AG04449 (cell line): ENCODE measurements at regions of chr1 and their contacts with region 1.

Region 1: GRCh38 chr1:151098126-151098525 is 27.6 kb downstream of the GABPB2 start:
- DNase-seq: no peak
- H3K4me3 ChIP-seq: no peak overlapping the region
- CTCF ChIP-seq: no peak

Region 2: DNA sequence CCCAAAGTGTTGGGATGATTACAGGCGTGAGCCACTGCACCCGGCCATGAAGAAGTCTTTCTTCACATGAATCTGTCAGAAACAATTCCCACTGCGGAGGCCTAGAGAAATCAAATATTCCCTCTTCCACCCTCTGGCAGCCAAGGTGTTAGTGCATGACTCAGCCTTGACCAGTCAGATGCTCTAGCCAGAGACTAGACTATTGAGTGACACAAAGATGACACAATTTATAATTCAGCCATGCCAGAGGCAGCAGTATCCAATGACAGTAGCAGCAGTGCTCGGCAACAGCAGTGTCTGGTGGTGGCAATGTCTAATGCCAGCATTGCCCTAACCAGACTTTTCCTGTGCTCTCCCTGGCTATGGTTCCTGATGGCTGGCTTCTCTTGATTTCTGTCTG is 202.5 kb before region 1 on chr1:
- CTCF ChIA-PET with region 1: no interaction called
- POLR2A ChIA-PET with region 1: no interaction called
- DNase-seq: no peak
- H3K4me3 ChIP-seq: no peak overlapping the region
- CTCF ChIP-seq: no peak

Region 3: GRCh38 chr1:151085953-151086559 is 12.1 kb before region 1 on chr1:
- CTCF ChIA-PET with region 1: interaction called, 115 read pairs
- POLR2A ChIA-PET with region 1: no interaction called
- DNase-seq: no peak
- H3K4me3 ChIP-seq: no peak overlapping the region
- CTCF ChIP-seq: no peak

Region 4: GRCh38 chr1:151124763-151125403 is 26.8 kb after region 1 on chr1:
- CTCF ChIA-PET with region 1: interaction called, 16 read pairs
- POLR2A ChIA-PET with region 1: no interaction called
- DNase-seq: no peak
- H3K4me3 ChIP-seq: no peak overlapping the region
- CTCF ChIP-seq: no peak

Region 5: GRCh38 chr1:151145304-151146071 is 47.4 kb after region 1 on chr1:
- CTCF ChIA-PET with region 1: interaction called, 412 read pairs
- POLR2A ChIA-PET with region 1: no interaction called
- DNase-seq: no peak
- H3K4me3 ChIP-seq: peak overlapping the region; percentile 80
- CTCF ChIP-seq: no peak